Activated B cell treated with CpG ODN at 0.5 μM for 24 hours (primary cell): ENCODE measurements at regions of chr13 and their contacts with region 1.

Region 1: DNA sequence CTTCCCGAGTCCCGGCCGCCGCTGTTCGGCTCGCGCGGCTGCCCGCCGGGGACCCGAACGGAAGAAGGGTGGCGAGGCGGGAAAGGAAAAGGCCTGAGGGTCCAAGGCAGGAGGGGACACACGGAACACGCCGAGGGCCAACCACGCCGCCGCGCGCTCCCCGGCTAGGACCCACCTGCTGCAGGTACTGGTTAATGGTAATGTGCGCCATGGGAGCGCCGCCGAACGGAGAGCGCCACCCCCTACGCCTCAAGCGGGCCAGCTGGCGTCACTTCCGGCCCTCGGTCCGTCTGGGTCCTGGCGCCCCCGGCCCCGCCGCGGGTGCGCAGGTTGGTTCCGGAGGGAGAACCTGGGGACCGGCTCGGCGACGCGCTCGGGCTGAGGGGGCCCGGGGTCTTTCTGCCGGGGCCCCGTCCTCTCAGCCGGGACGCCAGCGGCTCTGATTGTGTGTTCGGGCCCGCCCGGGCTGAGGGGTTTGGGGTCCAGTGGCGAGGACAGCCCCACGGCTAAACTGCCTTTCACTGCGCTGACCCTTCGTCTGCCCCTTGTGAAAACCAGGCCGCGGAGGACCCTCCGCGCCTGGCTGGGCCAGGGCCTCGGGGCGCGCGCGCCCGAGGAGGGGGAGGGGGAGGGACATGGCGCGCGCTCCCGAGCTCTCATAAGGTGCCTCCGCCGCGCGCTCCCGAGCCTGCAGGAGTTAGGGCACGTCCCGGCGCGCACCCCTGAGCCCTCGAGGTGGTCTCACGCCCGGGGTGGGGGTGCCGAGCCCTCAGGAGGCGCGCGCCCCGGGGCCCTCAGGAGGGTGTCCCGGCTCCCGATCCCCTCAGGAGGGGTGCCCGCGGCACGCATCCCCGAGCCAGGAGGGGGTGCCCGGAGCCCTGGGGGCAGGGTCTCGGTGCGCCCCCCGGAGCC is at the start of gene PCID2:
- DNase-seq: peak; percentile 99
- ATAC-seq: peak; percentile 73
- H3K4me3 Mint-ChIP-seq: peak within 1 kb of the TSS; percentile 89
- H3K27ac Mint-ChIP-seq: peak within 1 kb of the TSS; percentile 79
- H3K4me1 Mint-ChIP-seq: peaks cover 56% of the 10 kb centered on the region
- H3K27me3 Mint-ChIP-seq: no peaks in the 10 kb centered on the region
- CTCF ChIP-seq: no peak
- total RNA-seq, gene PCID2: 35.6 and 43.1 TPM in 2 replicates

Region 2: DNA sequence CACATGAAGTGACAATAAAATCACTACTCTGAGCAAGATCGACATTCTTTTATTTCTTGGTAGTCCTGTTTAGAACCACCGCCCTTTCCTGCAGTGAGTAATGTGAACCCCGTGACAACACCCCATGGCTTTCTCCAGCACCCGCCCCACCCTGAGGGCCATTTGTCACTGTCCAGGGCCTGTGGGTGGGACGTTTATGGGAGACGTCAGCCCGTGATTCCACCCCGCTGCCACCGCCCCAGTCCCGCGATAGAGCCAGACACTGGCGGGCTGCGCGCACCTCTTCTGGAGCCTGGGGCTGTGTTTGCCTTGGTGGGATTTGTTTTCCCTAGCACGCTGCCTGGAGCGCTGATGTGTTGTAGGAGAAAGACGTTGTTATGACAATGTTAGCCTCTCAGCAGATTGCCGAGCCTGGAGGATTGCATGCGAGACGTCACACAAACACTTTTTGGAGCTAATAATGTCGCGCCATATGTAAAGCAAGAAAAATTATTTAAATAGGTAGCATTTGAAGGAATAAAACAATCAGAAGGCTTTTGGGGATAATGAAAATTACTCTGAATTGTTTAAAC is 1624.5 kb before region 1 on chr13:
- CTCF ChIA-PET with region 1: no interaction called
- POLR2A ChIA-PET with region 1: no interaction called
- intact Hi-C with region 1: no loop called
- DNase-seq: no peak
- ATAC-seq: no peak
- H3K4me3 Mint-ChIP-seq: no peak overlapping the region
- H3K27ac Mint-ChIP-seq: no peak overlapping the region
- H3K4me1 Mint-ChIP-seq: no peaks in the 10 kb centered on the region
- H3K27me3 Mint-ChIP-seq: no peaks in the 10 kb centered on the region
- CTCF ChIP-seq: no peak

Region 3: DNA sequence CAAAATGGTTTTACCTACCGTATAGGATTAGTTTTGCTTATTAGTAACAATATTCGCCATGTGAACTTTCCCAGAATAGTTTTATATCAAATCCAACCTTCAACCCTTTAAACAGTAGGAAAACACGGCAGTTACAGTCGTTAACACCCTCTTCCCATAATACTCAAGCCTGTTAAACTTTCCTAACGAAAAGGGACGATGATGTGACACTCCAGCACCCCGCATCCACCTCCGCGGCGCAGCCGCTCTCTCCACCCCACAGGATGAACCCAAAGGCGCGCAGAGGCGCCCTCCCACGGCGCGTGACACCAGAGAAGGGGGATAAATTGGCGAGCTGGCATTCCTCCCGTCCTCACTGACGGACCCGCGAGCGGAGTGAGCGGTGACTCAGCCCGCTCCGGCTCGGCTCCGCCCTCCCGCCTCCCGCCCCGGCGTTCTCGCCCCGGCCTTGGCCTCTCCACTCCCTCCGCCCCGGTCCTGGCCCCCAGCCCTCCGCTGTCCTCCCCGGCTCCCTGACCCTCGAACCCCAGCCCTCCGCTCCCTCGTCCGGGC is 621.4 kb before region 1 on chr13:
- CTCF ChIA-PET with region 1: no interaction called
- POLR2A ChIA-PET with region 1: no interaction called
- intact Hi-C with region 1: loop called (anchors 2 kb)
- DNase-seq: peak; percentile 58
- ATAC-seq: peak; percentile 59
- H3K4me3 Mint-ChIP-seq: peak overlapping the region; percentile 94
- H3K27ac Mint-ChIP-seq: peak overlapping the region; percentile 84
- H3K4me1 Mint-ChIP-seq: peaks cover 44% of the 10 kb centered on the region
- H3K27me3 Mint-ChIP-seq: peaks cover 4% of the 10 kb centered on the region
- CTCF ChIP-seq: no peak

Region 4: DNA sequence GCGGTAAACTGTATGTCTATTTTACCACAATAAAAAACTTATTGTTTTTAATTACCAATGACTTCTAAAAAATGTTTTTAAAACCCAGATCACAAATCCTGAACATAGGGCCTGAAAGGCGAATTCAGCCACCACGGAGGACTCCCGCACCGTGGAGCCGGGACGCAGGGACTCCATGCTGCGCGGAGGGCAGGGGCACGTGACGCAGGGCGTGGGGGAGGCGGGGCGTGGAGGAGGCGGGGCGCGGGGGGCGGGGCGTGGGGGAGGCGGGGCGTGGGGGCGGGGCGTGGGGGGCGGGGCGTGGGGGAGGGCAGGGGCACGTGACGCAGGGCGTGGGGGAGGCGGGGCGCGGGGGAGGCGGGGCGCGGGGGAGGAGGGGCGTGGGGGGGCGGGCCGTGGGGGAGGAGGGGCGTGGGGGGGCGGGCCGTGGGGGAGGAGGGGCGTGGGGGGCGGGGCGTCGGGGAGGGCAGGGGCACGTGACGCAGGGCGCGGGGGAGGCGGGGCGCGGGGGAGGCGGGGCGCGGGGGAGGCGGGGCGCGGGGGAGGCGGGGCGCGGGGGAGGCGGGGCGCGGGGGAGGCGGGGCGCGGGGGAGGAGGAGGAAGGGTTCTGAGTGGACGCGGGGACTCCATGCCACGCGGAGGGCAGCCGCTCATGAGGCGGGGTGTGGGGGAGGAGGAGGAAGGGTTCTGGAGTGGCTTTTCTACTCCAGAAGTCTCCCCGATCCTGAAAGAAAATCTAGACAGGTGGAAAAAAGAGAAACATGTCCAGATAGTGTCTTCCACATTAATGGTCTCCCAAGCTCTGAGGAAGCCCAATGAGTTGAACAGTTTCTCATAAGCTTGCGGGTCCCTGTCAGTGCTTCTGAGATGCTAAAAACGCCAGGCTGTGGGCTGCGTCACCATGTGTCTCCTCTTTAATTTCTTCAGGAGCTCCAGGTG is 54.6 kb before region 1 on chr13:
- CTCF ChIA-PET with region 1: no interaction called
- POLR2A ChIA-PET with region 1: interaction called, 8 read pairs
- intact Hi-C with region 1: loop called (anchors 1 kb)
- DNase-seq: peak; percentile 50
- ATAC-seq: peak; percentile 85
- H3K4me3 Mint-ChIP-seq: peak overlapping the region; percentile 84
- H3K27ac Mint-ChIP-seq: peak overlapping the region; percentile 63
- H3K4me1 Mint-ChIP-seq: peaks cover 19% of the 10 kb centered on the region
- H3K27me3 Mint-ChIP-seq: peaks cover 12% of the 10 kb centered on the region
- CTCF ChIP-seq: no peak

Region 5: GRCh38 chr13:113393563-113394338 is 185.1 kb after region 1 on chr13:
- CTCF ChIA-PET with region 1: no interaction called
- POLR2A ChIA-PET with region 1: no interaction called
- intact Hi-C with region 1: loop called (anchors 2 kb)
- DNase-seq: peak; percentile 88
- ATAC-seq: peak; percentile 98
- H3K4me3 Mint-ChIP-seq: peak overlapping the region; percentile 84
- H3K27ac Mint-ChIP-seq: peak overlapping the region; percentile 50
- H3K4me1 Mint-ChIP-seq: peaks cover 8% of the 10 kb centered on the region
- H3K27me3 Mint-ChIP-seq: no peaks in the 10 kb centered on the region
- CTCF ChIP-seq: no peak

Region 6: DNA sequence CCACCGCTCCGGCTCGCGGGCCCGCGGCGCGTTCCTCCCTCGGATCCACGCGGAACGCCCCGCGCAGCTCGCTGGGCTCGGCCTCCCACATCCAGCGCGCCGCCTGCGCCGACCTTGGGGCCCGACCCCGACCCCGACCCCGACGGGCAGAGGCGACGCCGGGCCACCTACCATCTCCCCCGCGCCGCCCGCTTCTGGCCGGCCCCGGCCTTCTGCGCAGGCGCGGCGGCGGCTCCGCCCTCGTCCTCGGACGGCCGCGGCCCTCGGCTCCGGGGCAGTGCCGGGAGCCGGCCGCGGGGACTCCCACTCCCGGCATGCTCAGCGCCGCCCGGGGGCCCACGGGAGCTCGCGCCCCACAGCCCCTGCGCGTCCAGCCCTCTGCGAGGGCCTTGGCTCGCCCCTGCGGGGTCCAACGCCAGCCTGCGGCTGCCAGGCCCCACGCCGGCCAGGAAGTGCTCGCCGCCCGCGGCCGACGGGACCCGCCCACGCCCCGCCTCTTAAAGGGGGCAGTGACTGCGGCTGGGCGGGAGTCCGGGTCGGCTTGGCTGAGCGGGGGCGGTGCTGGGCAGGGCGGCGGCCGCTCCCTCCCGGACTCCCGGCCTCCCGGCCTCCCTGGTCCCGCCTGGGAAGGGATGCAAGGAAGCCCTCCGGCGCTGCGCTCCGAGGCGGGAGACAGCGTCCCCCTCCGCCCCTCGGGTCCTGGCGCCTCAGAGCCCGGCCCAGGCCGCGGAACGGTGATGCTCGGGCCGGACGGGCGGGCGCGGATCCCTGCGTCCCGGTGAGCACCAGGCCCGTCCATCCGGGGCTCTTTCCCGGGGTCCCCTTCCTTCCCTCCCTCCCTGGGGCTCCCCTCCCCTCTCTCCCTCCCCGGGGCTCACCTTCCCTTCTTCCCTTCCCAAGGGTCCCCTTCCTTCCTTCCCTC is 282.1 kb after region 1 on chr13 and contains the start of gene DCUN1D2:
- CTCF ChIA-PET with region 1: no interaction called
- POLR2A ChIA-PET with region 1: interaction called, 8 read pairs
- intact Hi-C with region 1: loop called (anchors 2 kb)
- DNase-seq: peak; percentile 91
- ATAC-seq: peak; percentile 90
- H3K4me3 Mint-ChIP-seq: peak within 1 kb of the TSS; percentile 90
- H3K27ac Mint-ChIP-seq: peak within 1 kb of the TSS; percentile 77
- H3K4me1 Mint-ChIP-seq: peaks cover 52% of the 10 kb centered on the region
- H3K27me3 Mint-ChIP-seq: no peaks in the 10 kb centered on the region
- CTCF ChIP-seq: no peak
- total RNA-seq, gene DCUN1D2: 19.8 and 26.2 TPM in 2 replicates